Activated T-helper 1 cell treated with anti-CD3 and anti-CD28 coated beads, Interleukin-12 subunit alpha, Interleukin-12 subunit beta, Interleukin-2, Interleukin-4 antibody, amounts not matched to agents 30 ng/mL and 10 ng/mL and 1 ng/mL, durations not matched to agents 14 hours and 24 hours and 36 hours (primary cell): ENCODE measurements at regions of chr11 and their contacts with region 1.

Region 1: DNA sequence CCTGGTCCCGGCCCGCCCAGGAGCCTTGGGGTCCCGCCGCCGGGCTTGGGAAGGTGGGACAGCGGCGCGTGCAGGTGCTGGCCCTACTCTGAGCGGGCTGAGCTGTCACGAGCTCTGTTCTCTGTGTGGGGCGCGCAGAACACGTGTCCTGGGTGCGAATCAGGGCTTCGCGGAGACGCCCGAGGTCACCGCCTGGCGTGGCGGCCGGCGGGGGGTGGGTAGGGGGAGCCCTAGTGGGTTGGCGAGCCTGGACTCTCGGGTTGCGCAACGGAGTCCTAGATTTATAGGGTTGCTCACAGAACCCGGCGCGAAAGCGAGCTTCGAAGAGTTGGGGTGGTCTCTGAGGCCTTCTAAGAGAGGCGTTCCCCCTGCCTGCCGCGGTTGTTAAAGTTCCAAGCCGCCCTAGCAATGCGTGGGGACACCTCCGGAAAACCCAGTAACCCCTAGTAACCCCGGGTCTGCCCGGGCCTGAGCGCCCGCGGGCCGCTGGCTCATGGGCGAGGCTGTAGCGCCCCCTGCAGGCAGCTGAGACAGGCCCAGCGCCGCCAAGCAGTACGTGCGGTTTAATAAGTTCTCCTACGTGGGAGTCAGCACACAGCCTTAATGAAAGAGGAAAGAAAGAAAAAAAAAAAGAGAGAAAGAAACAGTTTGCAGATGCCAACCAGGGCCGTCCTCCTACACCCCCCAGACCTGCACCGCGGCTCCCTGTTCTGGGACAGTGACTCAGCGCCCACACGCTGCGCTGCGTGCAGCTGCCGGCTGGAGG is 2.8 kb downstream of the ADM start:
- DNase-seq: peak; percentile 71
- H3K4me3 Mint-ChIP-seq: peak overlapping the region; percentile 77
- H3K27ac Mint-ChIP-seq: peak overlapping the region; percentile 83
- H3K4me1 Mint-ChIP-seq: peaks cover 68% of the 10 kb centered on the region
- H3K27me3 Mint-ChIP-seq: peaks cover 52% of the 10 kb centered on the region

Region 2: GRCh38 chr11:8732748-8733241 is 1574.8 kb before region 1 on chr11:
- intact Hi-C with region 1: no loop called
- DNase-seq: no peak
- H3K4me3 Mint-ChIP-seq: no peak overlapping the region
- H3K27ac Mint-ChIP-seq: no peak overlapping the region
- H3K4me1 Mint-ChIP-seq: no peaks in the 10 kb centered on the region
- H3K27me3 Mint-ChIP-seq: no peaks in the 10 kb centered on the region

Region 3: DNA sequence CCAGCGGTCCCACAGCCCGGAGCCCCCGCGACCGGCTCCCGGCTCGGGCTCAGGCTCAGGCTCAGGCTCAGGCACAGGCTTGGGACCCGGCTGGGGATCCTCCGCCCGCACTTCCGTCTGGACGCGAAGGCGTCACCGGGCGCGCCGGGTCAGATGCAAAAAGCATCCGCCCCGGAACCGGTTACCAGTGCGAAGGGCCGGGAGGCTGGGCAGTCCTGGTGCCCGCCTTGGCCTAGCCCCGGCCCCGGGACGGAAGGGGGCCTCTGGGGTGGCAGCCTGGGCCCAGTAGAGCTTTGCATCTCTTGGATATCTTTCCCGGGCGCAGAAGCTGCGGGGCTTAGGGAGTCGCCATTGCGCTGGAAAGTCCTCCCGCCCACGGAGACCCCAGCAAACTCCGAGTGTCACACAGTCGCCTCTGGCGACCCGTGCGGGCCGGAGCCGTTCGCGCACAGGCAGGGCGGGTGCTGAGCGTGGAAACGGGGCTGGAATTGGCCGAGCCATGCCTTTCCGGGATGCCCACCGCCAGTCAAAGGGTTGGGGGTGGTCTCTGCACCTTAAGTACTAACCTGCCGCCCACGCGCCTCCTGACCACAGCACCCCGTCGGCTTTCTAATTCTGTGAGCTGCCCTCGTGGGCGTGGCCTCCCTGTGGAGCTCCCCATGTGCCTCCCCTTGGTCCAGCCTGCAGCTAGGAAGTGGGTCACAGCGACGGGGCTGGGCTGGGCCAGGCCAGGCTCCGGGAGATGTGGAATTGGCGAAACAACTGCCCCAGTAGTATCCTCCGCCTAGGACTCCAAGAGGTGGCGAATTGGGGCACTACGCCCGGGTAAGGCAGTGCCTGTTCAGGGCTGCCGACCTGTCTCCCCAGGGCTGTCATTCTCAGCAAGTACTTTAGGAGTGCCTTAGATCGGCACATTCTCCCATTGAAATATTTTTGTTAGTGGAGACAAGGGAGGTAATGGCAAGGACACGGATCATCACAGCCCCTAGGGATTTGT is 1343.0 kb before region 1 on chr11 and contains the start of gene TMEM9B:
- intact Hi-C with region 1: loop called (anchors 5 kb)
- DNase-seq: peak; percentile 79
- H3K4me3 Mint-ChIP-seq: peak within 1 kb of the TSS; percentile 99
- H3K27ac Mint-ChIP-seq: peak within 1 kb of the TSS; percentile 95
- H3K4me1 Mint-ChIP-seq: peaks cover 31% of the 10 kb centered on the region
- H3K27me3 Mint-ChIP-seq: no peaks in the 10 kb centered on the region
- total RNA-seq, gene TMEM9B: 27.0 and 31.3 TPM in 2 replicates

Region 4: DNA sequence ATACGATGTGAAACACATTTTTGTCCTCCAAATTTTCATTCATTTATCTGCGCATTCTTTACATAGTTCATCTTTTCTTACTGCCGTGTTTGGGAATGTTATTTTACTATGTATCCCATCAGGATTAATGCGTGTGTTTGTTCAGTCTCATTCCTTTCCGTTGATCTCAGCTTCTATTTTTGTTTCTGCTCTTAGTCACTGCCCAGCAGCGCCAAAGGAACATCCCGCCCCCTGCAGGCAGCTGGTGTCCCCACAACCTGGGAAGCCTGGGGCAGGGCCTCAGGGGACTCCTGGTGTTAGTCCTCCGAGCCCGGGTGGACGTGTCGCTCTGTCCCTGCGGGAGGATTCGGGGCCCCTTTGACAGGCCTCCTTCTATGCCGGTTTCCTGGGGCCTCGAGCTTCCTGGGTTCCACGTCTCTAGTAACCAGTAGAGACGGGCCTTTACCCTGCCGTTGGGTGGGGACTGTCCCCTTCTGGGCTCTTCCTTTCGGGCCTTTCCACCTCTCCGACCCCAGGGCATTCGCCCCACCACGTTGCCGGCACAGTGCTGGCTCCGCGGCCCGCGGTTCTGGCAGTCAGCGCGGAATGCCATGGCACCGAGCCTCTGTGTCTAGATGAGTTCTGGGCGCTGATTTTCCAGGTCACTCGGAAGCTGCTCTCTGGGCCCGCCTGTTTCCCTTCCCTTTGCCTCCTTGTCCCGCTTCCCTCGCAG is 694.4 kb before region 1 on chr11:
- intact Hi-C with region 1: loop called (anchors 5 kb)
- DNase-seq: peak; percentile 80
- H3K4me3 Mint-ChIP-seq: peak overlapping the region; percentile 89
- H3K27ac Mint-ChIP-seq: peak overlapping the region; percentile 99
- H3K4me1 Mint-ChIP-seq: peaks cover 44% of the 10 kb centered on the region
- H3K27me3 Mint-ChIP-seq: peaks cover 1% of the 10 kb centered on the region

Region 5: GRCh38 chr11:9861860-9862725 is 445.5 kb before region 1 on chr11:
- intact Hi-C with region 1: loop called (anchors 5 kb)
- DNase-seq: peak; percentile 11
- H3K4me3 Mint-ChIP-seq: no peak overlapping the region
- H3K27ac Mint-ChIP-seq: peak overlapping the region; percentile 1
- H3K4me1 Mint-ChIP-seq: peaks cover 34% of the 10 kb centered on the region
- H3K27me3 Mint-ChIP-seq: peaks cover 4% of the 10 kb centered on the region

Region 6: GRCh38 chr11:10282117-10282516 is 25.5 kb before region 1 on chr11:
- intact Hi-C with region 1: no loop called
- DNase-seq: no peak
- H3K4me3 Mint-ChIP-seq: no peak overlapping the region
- H3K27ac Mint-ChIP-seq: no peak overlapping the region
- H3K4me1 Mint-ChIP-seq: peaks cover 10% of the 10 kb centered on the region
- H3K27me3 Mint-ChIP-seq: peaks cover 12% of the 10 kb centered on the region

Region 7: GRCh38 chr11:10293423-10294289 is 14.0 kb before region 1 on chr11 and contains the start of gene SBF2:
- intact Hi-C with region 1: loop called (anchors 1 kb)
- DNase-seq: peak; percentile 69
- H3K4me3 Mint-ChIP-seq: peak within 1 kb of the TSS; percentile 80
- H3K27ac Mint-ChIP-seq: peak within 1 kb of the TSS; percentile 64
- H3K4me1 Mint-ChIP-seq: peaks cover 31% of the 10 kb centered on the region
- H3K27me3 Mint-ChIP-seq: peaks cover 61% of the 10 kb centered on the region
- total RNA-seq, gene SBF2: 5.3 and 5.4 TPM in 2 replicates

Region 8: DNA sequence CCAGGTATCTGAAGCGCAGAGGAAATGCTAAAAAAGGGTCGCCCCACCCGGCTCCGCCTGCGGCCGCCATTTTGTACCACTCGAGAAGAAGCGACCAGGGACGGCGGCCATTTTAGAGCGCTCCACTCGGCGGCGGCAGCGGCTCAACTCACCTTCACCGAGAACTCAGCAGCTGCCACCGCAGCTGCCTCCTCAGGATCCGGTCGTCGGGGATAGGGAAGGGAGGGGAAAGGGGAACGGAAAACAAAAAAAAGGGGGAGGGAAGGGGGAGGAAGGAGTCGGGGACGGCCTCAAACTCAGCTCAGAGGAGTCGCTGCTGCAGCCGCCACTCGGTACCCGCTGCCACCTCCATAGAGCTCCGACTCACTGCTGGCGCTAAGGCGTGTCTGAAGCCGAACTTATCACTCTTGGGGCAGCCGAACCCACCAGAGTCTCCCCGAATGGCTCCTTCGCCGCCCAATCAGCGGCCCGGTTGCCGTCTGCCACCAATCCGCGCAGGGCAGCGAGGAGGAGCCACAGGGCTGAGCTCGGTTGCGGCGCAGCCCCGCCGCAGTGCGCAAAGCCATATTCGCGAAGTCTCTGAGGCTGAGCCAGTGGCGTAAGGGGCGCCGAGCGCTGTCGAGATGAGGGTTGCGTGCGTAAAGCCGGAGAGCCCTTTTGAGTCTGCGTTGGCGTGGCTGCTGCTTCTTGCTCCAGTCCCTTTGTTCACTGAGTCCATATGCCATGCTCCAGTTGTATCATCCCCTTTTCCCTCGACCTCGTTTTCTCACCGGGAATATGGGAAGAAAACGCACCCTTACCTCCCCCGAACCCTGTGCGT is 501.1 kb after region 1 on chr11 and contains the start of gene EIF4G2:
- intact Hi-C with region 1: loop called (anchors 5 kb)
- DNase-seq: peak; percentile 98
- H3K4me3 Mint-ChIP-seq: peak within 1 kb of the TSS; percentile 95
- H3K27ac Mint-ChIP-seq: peak within 1 kb of the TSS; percentile 98
- H3K4me1 Mint-ChIP-seq: peaks cover 43% of the 10 kb centered on the region
- H3K27me3 Mint-ChIP-seq: no peaks in the 10 kb centered on the region
- total RNA-seq, gene EIF4G2: 1,084 and 1,108 TPM in 2 replicates